Activated CD4-positive, alpha-beta T cell treated with anti-CD3 and anti-CD28 coated beads, Interleukin-2, amount 10 ng/mL, durations not matched to agents 24 days and 14 days (primary cell): ENCODE measurements at regions of chr4 and their contacts with region 1.

Region 1: GRCh38 chr4:83284193-83285054 is at the start of gene COQ2:
- DNase-seq: peak; percentile 98
- H3K4me3 Mint-ChIP-seq: peak within 1 kb of the TSS; percentile 93
- H3K27ac Mint-ChIP-seq: peak within 1 kb of the TSS; percentile 96
- H3K4me1 Mint-ChIP-seq: peaks cover 31% of the 10 kb centered on the region
- H3K27me3 Mint-ChIP-seq: no peaks in the 10 kb centered on the region
- total RNA-seq, gene COQ2: 20.5 and 20.7 TPM in 2 replicates

Region 2: DNA sequence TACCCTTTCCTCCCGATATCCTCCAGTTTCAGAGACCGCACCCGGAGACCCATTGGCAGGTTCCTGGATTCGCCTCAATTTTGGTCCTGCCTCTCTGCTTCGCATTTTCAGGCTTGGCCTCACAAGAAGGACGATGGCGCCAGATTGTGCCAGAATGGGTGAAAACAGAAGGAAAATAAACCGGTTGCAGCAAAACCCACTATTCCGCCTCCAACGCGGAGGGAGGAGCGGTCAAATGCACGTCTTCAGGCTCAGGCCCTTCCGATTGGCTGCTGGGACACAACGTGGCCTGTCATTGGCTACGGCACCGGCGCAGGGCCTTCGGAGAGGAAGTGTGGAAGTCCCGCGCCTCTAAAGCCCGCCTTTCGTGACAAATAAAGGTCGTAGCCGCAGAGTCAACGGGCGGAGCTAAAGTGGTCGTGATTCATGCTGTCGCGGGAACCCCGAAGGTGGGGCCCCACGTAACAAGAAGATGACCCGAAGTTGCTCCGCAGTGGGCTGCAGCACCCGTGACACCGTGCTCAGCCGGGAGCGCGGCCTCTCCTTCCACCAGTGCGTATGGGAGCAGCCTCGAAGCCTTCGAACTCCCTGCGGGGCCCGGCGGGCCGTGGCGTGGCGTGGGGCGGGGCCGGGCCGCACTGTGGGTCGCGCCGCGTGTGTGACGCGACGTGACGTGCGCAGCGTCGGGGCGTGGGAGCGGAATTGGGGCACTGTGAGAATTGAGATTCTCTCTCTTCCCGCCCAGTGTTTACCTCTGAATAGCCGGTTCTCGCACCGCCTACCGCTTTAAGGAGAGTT is 383.9 kb before region 1 on chr4 and contains the start of gene THAP9:
- intact Hi-C with region 1: loop called (anchors 2 kb)
- DNase-seq: peak; percentile 99
- H3K4me3 Mint-ChIP-seq: no peak within 1 kb of the TSS
- H3K27ac Mint-ChIP-seq: no peak within 1 kb of the TSS
- H3K4me1 Mint-ChIP-seq: peaks cover 29% of the 10 kb centered on the region
- H3K27me3 Mint-ChIP-seq: peaks cover 2% of the 10 kb centered on the region
- total RNA-seq, gene THAP9: 1.7 and 3.7 TPM in 2 replicates

Region 3: GRCh38 chr4:83074086-83074704 is 210.2 kb before region 1 on chr4:
- intact Hi-C with region 1: loop called (anchors 1 kb)
- DNase-seq: peak; percentile 93
- H3K4me3 Mint-ChIP-seq: peak overlapping the region; percentile 2
- H3K27ac Mint-ChIP-seq: peak overlapping the region; percentile 43
- H3K4me1 Mint-ChIP-seq: peaks cover 11% of the 10 kb centered on the region
- H3K27me3 Mint-ChIP-seq: no peaks in the 10 kb centered on the region

Region 4: GRCh38 chr4:83334425-83335241 is 50.2 kb after region 1 on chr4 and contains the start of gene HPSE:
- intact Hi-C with region 1: loop called (anchors 1 kb)
- DNase-seq: peak; percentile 93
- H3K4me3 Mint-ChIP-seq: peak within 1 kb of the TSS; percentile 88
- H3K27ac Mint-ChIP-seq: peak within 1 kb of the TSS; percentile 62
- H3K4me1 Mint-ChIP-seq: peaks cover 29% of the 10 kb centered on the region
- H3K27me3 Mint-ChIP-seq: peaks cover 20% of the 10 kb centered on the region
- total RNA-seq, gene HPSE: 17.7 and 19.8 TPM in 2 replicates

Region 5: DNA sequence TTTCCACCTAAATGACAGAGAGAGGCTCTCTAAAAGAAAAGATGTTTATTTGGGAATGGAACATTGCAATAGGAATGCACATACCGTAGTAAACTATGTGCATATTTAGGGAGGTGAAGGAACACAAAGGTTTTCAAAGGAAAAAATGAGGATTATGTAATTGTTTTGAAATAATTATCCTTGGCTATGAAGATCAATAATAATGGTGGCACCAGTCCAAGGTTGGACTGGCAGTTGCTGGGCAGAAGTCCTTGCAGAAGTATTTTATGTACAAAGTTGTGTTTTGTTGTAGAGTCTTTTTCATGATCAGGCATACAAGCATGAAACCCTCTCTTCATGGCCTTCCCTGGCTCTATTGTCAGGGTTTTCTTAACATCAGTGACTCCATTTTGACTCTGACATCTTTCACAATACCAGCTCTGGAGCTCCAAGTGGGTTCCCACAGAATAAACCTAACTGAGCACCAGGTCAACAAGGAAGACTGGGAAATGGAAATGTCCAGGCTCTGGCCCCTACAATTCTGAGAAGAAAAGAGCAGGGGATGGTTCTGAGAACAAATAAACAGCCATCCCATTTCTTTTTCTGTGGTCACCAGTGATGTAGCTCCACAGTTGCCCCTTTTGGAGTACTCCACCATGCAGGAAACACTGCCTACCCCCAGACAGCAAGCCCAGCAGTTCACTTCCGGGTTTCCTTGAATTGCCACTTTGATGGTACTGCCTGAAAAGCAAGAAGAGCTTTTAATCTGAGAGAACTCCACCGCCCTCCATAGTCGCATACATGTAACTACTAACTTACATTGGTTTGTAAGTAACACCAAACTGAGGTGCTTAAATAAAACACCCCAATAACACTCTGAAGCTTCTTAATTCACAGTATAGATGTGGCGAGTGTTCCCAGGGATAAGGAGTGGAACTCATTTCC is 103.6 kb after region 1 on chr4:
- intact Hi-C with region 1: loop called (anchors 1 kb)
- DNase-seq: peak; percentile 81
- H3K4me3 Mint-ChIP-seq: no peak overlapping the region
- H3K27ac Mint-ChIP-seq: peak overlapping the region; percentile 58
- H3K4me1 Mint-ChIP-seq: peaks cover 9% of the 10 kb centered on the region
- H3K27me3 Mint-ChIP-seq: peaks cover 4% of the 10 kb centered on the region

Region 6: GRCh38 chr4:83771113-83771705 is 486.8 kb after region 1 on chr4:
- intact Hi-C with region 1: no loop called
- DNase-seq: no peak
- H3K4me3 Mint-ChIP-seq: no peak overlapping the region
- H3K27ac Mint-ChIP-seq: no peak overlapping the region
- H3K4me1 Mint-ChIP-seq: no peaks in the 10 kb centered on the region
- H3K27me3 Mint-ChIP-seq: no peaks in the 10 kb centered on the region